PC-3 (cell line): ENCODE measurements at regions of chr6 and their contacts with region 1.

Region 1: DNA sequence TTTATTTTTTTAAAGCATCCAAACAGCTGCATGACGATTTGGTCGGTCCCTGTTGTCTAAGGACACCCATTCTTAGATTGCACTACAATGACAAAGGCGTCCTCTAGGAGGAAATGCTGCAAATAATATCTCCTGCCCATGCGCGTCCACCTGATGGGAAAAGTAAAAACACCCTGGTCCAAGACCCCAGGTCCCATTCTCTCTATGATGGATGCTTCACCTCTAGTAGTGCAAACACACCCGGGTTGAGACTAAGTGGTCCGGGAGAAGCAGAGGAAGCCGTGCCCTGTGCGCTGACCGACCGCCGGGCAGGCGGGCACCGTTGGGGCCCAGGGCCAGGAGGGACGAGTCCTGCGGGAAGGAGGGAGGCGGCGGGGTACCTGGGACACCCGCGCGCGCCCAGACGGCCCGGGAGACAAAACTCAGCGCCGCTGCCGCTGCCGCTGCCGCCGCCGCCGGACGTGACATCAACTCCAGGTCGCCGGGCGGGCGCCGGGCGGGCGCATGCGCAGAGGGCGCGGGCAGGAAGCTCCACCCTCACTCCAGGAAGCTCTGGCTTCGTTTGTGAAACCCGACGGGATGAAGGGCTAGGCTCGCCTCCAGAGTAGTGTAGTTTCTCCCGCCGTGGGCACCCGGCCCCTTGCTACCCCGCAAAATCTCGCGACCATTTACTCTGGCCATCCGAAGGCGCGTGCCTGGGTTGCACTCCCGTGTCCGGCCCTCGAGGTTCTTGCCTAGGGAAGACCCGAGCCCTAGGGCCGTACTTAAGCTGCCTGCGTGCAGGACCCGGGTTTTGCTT is at the start of gene TBC1D7:
- DNase-seq: peak; percentile 89
- ATAC-seq: peak; percentile 78
- H3K4me3 ChIP-seq: peak within 1 kb of the TSS; percentile 90
- H3K27ac ChIP-seq: peak within 1 kb of the TSS; percentile 76
- H3K4me1 ChIP-seq: peaks cover 30% of the 10 kb centered on the region
- H3K27me3 ChIP-seq: no peaks in the 10 kb centered on the region
- CTCF ChIP-seq: peak; percentile 25
- total RNA-seq, gene TBC1D7: 16.9 and 18.5 TPM in 2 replicates

Region 2: DNA sequence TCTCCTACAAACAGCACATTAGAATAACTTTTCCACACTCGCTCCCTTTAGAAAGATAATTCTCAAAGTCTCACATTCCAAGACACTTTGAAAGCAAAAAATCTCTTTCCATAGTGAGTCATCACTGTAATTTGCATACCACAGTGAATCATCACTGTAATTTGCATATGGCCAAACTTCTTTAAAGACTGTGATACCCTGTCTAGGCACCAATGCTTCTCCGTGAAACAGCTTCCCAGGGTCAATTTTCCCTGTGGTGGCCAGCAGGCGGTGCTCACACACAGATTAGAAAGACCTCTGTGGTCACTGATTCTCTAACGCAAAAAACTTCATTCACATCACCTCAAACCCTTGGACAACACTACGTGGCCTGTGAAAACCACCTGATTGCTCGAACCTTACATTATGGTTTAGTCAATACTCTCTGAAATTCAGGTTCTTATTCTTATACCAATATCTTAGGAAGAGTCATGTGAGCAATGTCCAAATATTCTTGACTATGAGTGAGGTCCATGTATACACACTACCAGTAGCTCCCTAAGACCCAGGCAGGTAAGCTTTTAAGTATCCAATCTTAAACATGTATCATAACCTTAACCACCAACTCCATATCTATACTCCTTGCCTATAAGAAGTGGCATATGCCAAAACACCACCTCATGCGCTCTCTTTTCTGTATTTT is 690.2 kb before region 1 on chr6:
- CTCF ChIA-PET with region 1: no interaction called
- POLR2A ChIA-PET with region 1: no interaction called
- intact Hi-C with region 1: loop called (anchors 2 kb)
- DNase-seq: peak; percentile 80
- ATAC-seq: peak; percentile 86
- H3K4me3 ChIP-seq: no peak overlapping the region
- H3K27ac ChIP-seq: no peak overlapping the region
- H3K4me1 ChIP-seq: 0 out of 2 replicates have a peak, but pooled peaks cover 6% of the 10 kb centered on the region
- H3K27me3 ChIP-seq: peaks cover 14% of the 10 kb centered on the region; the same call in 1 of the 2 replicates
- CTCF ChIP-seq: peak; percentile 91

Region 3: DNA sequence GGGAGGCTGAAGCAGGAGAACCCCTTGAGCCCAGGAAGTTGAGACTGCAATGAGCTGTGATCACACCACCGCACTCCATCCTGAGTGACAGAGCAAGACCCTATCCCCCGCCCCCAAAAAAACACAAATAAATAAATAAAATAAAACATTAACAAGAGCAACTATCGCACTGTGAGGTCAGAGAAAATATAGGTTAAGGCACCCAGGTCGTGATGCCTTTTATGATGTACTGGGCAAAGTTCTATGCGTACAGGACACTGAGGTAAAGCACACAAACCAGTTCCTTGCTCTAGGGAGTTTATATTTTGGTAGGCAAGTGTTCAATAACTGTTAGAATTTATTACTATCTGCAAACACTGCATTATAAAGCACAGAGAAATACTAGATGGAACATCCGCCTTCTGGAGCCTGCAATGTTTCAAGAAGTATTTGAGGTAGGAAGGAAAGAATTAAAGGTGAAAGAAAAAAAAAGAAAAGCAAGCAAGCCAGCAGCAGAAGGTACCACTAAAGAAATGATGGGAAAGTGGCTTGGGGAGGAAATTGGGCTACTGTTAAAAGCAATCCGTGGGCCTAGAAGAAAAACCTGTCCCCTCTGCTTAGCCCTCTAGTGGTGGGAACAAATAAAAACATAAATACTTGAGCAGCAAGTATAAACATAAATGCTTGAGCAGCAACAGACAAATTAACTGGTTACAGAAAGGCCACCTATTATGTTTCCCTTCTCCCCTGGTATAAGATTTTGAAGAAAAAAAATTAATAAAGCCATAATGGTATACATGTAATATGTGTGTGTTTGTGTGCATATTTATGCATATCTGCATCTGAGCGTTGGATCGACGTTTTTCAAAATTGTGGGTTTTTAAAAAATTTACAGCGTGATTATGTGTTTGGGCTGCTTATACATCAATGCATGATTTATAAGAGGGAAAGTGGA is 483.7 kb before region 1 on chr6:
- CTCF ChIA-PET with region 1: no interaction called
- POLR2A ChIA-PET with region 1: no interaction called
- intact Hi-C with region 1: no loop called
- DNase-seq: peak; percentile 52
- ATAC-seq: no peak
- H3K4me3 ChIP-seq: no peak overlapping the region
- H3K27ac ChIP-seq: no peak overlapping the region
- H3K4me1 ChIP-seq: no peaks in the 10 kb centered on the region
- H3K27me3 ChIP-seq: peaks cover 58% of the 10 kb centered on the region
- CTCF ChIP-seq: peak; percentile 81

Region 4: DNA sequence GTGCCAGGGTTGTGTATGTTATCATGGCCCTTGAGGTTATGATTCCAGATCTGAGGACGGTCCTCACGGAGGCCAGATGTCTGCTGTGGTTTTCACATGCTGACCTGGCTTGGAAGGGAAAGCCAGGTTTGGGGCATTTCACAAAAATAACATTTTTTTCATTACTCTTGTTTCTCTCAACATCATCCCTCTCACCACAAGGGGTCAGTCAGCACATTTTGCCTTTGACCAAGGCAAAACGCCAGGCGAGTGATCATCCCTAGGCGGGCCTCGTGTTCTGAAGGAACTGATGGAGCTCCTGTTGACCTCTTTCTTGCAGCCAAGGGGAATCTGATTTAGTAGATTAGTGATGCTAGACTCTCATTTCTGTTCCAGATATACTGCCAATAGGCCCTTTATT is 133.4 kb before region 1 on chr6:
- CTCF ChIA-PET with region 1: interaction called, 4 read pairs
- POLR2A ChIA-PET with region 1: no interaction called
- intact Hi-C with region 1: loop called (anchors 1 kb)
- DNase-seq: peak; percentile 69
- ATAC-seq: peak; percentile 53
- H3K4me3 ChIP-seq: no peak overlapping the region
- H3K27ac ChIP-seq: no peak overlapping the region
- H3K4me1 ChIP-seq: no peaks in the 10 kb centered on the region
- H3K27me3 ChIP-seq: peaks cover 50% of the 10 kb centered on the region
- CTCF ChIP-seq: peak; percentile 70

Region 5: GRCh38 chr6:13487122-13488014 is 159.1 kb after region 1 on chr6 and contains the start of gene GFOD1:
- CTCF ChIA-PET with region 1: no interaction called
- POLR2A ChIA-PET with region 1: no interaction called
- intact Hi-C with region 1: loop called (anchors 2 kb)
- DNase-seq: peak; percentile 89
- ATAC-seq: peak; percentile 81
- H3K4me3 ChIP-seq: peak within 1 kb of the TSS; percentile 85
- H3K27ac ChIP-seq: peak within 1 kb of the TSS; percentile 46
- H3K4me1 ChIP-seq: peaks cover 28% of the 10 kb centered on the region
- H3K27me3 ChIP-seq: no peaks in the 10 kb centered on the region
- CTCF ChIP-seq: peak; percentile 23; the same call in 1 of the 2 replicates
- total RNA-seq, gene GFOD1: 16.0 and 21.8 TPM in 2 replicates

Region 6: GRCh38 chr6:13614926-13615798 is 286.9 kb after region 1 on chr6 and contains the start of gene NOL7:
- CTCF ChIA-PET with region 1: interaction called, 3 read pairs
- POLR2A ChIA-PET with region 1: interaction called, 5 read pairs
- intact Hi-C with region 1: loop called (anchors 5 kb)
- DNase-seq: peak; percentile 98
- ATAC-seq: peak; percentile 87
- H3K4me3 ChIP-seq: peak within 1 kb of the TSS; percentile 86
- H3K27ac ChIP-seq: peak within 1 kb of the TSS; percentile 62
- H3K4me1 ChIP-seq: peaks cover 22% of the 10 kb centered on the region
- H3K27me3 ChIP-seq: no peaks in the 10 kb centered on the region
- CTCF ChIP-seq: peak; percentile 89
- total RNA-seq, gene NOL7: 95.4 and 163 TPM in 2 replicates